OCI-LY7 (cell line): ENCODE measurements at regions of chr10 and their contacts with region 1.

Region 1: DNA sequence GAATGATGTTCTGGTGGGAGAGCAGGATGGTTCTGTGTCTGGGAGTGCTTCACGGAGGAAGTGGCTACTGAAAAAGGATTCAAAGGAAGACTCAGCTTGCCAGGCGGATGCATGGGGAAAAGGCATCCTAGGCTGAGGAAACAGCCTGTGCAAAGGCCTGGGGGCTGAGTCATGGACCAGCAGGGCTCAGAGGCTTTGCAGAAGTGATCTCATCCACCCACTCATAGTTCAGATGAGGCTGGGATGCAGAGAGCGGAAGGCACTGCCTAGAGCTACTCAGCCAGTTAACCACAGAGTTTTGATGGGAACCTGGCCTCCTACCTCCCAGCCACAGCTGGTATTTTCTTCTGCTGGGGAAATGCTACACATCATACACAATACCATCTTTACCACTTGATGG is 15.8 kb upstream of the ADAMTS14 start:
- DNase-seq: no peak
- H3K4me3 ChIP-seq: no peak overlapping the region
- H3K27ac ChIP-seq: no peak overlapping the region
- H3K4me1 ChIP-seq: no peaks in the 10 kb centered on the region
- CTCF ChIP-seq: no peak

Region 2: GRCh38 chr10:71494980-71495381 is 838.5 kb after region 1 on chr10:
- CTCF ChIA-PET with region 1: no interaction called
- POLR2A ChIA-PET with region 1: interaction called, 10 read pairs
- intact Hi-C with region 1: no loop called
- DNase-seq: peak; percentile 21
- H3K4me3 ChIP-seq: no peak overlapping the region
- H3K27ac ChIP-seq: no peak overlapping the region
- H3K4me1 ChIP-seq: peaks cover 7% of the 10 kb centered on the region
- CTCF ChIP-seq: no peak